ENCODE measurements at regions of chr1 and their contacts with region 1.

Region 1: DNA sequence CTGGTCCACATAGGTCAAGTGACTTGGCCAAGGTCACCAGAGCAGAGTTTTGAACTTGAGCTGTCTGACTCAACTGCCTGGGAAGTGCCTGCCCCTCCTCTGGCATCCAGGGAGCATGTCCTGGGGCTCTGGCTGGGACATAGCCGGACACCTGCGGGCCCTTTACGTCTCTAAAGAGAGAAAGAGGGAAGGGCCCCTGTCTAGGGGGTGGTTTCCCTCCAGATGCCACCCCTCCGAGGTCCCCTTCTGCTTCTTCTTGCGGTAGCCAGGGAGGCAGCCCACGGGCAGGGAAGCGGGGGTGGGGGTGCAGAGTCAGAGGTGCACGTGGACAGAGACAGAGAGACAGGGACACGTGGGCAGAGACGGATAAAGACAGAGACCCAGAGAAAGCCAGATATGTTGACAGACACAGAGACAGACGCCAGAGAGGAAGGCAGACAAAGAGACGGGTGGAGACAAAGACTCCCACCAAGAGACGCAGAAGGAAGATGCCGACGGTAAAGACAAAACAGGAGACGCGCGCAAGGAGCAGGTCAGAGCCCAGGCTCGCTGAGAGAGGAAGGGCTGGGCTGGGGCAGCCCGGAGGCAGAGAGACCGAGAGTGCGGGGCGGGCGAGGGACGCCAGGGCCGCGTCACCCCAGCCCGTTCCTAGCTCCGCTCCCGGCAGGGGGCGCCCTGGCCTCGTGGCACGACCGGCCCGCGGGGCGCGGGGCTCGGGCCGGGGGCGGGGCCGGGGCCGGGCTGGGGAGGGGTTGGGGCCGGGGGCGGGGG is 458 bp upstream of the ALPL start:
- H3K4me3 Mint-ChIP-seq: no peak overlapping the region
- H3K27ac Mint-ChIP-seq: no peak overlapping the region
- H3K4me1 Mint-ChIP-seq: peaks cover 7% of the 10 kb centered on the region
- H3K27me3 Mint-ChIP-seq: peaks cover 68% of the 10 kb centered on the region

Region 2: DNA sequence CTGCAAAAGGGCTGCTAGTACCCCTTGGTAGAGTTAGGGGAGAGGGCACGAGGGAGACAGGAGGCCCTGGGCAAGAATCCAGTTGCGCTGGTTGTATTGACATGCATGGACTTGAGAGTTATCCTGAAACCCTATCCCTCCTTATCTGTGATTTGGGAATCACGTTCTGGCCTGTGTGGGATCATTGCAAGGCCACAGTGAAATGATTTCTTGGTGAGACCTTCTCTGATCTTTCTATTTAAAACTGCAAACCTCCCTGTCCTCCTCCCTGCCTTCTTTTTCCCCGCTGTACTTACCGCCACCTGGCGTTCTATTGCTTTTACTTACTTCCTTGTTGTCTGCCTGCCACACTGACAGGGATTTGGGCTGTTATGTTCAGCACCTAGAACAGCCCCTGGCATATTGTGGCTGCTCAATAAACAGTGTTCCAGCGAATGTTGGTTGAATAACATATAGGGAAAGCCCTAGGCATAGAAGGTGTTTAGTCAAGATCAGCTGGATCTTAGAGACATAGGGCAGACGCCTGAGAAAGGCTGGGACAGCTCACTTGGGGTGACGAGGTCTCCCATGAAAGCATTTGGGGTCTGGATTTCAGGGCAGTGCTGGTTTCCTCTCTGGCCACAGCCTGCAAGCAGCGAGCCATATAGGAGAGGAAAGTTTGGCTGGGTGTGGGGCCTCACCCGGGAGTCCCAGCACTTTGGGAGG is 26.1 kb after region 1 on chr1:
- intact Hi-C with region 1: loop called (anchors 2 kb)
- H3K4me3 Mint-ChIP-seq: no peak overlapping the region
- H3K27ac Mint-ChIP-seq: no peak overlapping the region
- H3K4me1 Mint-ChIP-seq: no peaks in the 10 kb centered on the region
- H3K27me3 Mint-ChIP-seq: peaks cover 78% of the 10 kb centered on the region

Region 3: GRCh38 chr1:21594935-21595897 is 86.5 kb after region 1 on chr1:
- intact Hi-C with region 1: loop called (anchors 5 kb)
- H3K4me3 Mint-ChIP-seq: no peak overlapping the region
- H3K27ac Mint-ChIP-seq: no peak overlapping the region
- H3K4me1 Mint-ChIP-seq: peaks cover 6% of the 10 kb centered on the region
- H3K27me3 Mint-ChIP-seq: peaks cover 33% of the 10 kb centered on the region

Region 4: GRCh38 chr1:21659099-21659923 is 150.5 kb after region 1 on chr1:
- intact Hi-C with region 1: loop called (anchors 2 kb)
- H3K4me3 Mint-ChIP-seq: peak overlapping the region; percentile 23
- H3K27ac Mint-ChIP-seq: no peak overlapping the region
- H3K4me1 Mint-ChIP-seq: peaks cover 17% of the 10 kb centered on the region
- H3K27me3 Mint-ChIP-seq: peaks cover 62% of the 10 kb centered on the region